Right cardiac atrium (tissue), 5 donors: ENCODE measurements at regions of chr20 and their contacts with region 1.

Region 1: DNA sequence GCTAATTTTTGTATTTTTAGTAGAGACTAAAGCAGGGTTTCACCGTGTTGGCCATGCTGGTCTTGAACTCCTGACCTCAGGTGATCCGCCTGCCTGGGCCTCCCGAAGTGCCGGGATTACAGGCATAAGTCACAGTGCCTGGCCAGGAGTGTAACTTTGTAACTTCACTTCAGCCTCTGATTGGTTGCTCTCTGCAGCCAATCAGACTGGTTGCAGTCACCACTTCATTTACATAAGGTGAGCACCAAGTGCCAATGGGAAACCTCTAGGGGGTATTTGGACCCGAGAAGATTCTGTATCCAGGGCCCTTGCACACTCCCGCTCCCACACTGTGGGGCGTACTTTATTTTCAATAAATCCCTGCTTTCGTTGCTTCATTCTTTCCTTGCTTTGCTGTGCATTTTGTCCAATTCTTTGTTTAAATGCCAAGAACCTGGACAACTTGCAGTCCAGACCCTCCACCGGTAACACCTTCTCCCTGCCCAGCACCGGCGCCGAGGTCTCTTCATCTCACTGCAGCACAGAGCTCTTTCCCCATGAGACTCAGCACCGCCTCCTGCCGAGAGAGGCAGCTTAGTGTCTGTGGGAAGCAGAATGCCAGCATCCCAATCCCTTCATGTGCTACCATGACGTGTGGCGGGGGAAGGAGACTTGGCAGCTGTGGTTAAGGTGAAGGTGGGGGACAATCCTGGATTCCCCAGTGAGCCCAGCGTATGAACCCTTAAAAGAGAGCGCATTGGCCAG is 14.0 kb upstream of the MRGBP start:
- DNase-seq: no peak
- ATAC-seq: no peak
- H3K4me3 ChIP-seq: no peak overlapping the region
- H3K27ac ChIP-seq: no peak overlapping the region
- H3K4me1 ChIP-seq: peaks cover 4% of the 10 kb centered on the region
- H3K27me3 ChIP-seq: no peaks in the 10 kb centered on the region

Region 2: GRCh38 chr20:62685781-62686555 is 96.4 kb before region 1 on chr20:
- intact Hi-C with region 1: loop called in 1 of 4 experiments (anchors 5 kb)
- DNase-seq: peak in 1 of 3 donors; percentile 76
- ATAC-seq: peak; percentile 30 to 34
- H3K4me3 ChIP-seq: no peak overlapping the region
- H3K27ac ChIP-seq: no peak overlapping the region
- H3K4me1 ChIP-seq: no peaks in the 10 kb centered on the region
- H3K27me3 ChIP-seq: no peaks in the 10 kb centered on the region